ENCODE measurements at regions of chr12 and their contacts with region 1.

Region 1: GRCh38 chr12:31896514-31897039 is 62.6 kb upstream of the RESF1 start:
- DNase-seq: peak; percentile 88
- H3K4me3 Mint-ChIP-seq: peak overlapping the region; percentile 73
- H3K27ac Mint-ChIP-seq: peak overlapping the region; percentile 99
- H3K4me1 Mint-ChIP-seq: peaks cover 51% of the 10 kb centered on the region
- H3K27me3 Mint-ChIP-seq: no peaks in the 10 kb centered on the region

Region 2: DNA sequence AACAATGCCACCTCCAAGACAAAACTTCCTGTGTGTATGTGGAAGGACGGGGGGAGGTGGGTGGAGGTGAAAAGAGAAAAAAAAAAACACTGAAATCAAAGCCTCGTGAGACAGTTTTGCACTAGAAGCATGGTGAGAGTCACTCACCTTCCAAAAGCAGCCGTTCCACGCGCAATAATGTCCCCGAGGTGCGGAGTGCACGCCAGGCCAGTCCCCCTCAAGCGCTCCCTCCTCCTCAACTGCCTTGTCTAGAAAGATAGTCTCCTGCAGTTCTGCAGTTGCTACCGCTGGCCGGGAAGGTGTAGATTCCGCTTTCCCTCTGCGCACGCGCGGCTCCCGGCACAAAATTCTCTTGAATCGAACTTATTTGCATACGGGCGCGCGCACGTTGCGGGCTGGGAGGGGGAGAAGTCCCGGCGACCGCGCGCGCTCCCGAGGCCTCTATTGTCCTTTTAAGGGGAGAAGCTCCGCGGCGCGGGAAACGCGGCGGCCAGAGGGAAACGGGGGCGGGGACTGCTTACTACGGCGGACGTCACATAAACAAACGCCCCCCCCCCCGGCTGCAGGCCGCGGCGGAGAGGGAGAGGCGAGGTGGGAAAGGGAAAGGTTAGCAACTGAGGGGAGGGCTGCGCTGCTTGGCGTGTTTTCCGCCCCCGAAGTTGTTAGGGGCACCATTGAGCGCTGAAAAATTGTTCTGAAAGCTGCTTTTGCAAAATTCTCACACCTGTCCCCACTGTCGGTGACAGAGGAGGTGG is 570.5 kb before region 1 on chr12 and contains the start of gene SINHCAF:
- intact Hi-C with region 1: loop called (anchors 10 kb)
- DNase-seq: peak; percentile 98
- H3K4me3 Mint-ChIP-seq: peak within 1 kb of the TSS; percentile 97
- H3K27ac Mint-ChIP-seq: peak within 1 kb of the TSS; percentile 95
- H3K4me1 Mint-ChIP-seq: peaks cover 41% of the 10 kb centered on the region
- H3K27me3 Mint-ChIP-seq: peaks cover 15% of the 10 kb centered on the region
- total RNA-seq, gene SINHCAF: 270 and 276 TPM in 2 replicates

Region 3: DNA sequence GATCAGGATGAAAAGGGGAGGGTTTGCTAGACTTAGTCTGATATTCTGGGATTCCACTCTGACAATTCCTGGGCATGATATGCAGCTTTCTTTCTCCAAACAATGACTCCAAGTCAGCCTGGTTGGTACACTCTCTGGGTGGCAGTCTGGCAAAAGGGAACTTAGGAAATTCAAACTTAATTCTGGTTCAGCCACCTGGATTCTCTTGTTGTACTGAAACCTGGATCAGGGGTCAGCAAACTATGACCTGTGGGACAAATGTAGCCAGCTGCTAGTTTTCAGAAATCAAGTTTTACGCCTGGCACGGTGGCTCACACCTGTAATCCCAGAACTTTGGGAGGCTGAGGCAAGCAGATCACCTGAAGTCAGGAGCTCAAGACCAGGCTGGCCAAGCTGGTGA is 174.0 kb before region 1 on chr12:
- intact Hi-C with region 1: loop called (anchors 1 kb)
- DNase-seq: no peak
- H3K4me3 Mint-ChIP-seq: no peak overlapping the region
- H3K27ac Mint-ChIP-seq: no peak overlapping the region
- H3K4me1 Mint-ChIP-seq: peaks cover 53% of the 10 kb centered on the region
- H3K27me3 Mint-ChIP-seq: no peaks in the 10 kb centered on the region

Region 4: GRCh38 chr12:31749024-31749704 is 147.4 kb before region 1 on chr12:
- intact Hi-C with region 1: loop called (anchors 1 kb)
- DNase-seq: peak; percentile 71
- H3K4me3 Mint-ChIP-seq: no peak overlapping the region
- H3K27ac Mint-ChIP-seq: peak overlapping the region; percentile 27
- H3K4me1 Mint-ChIP-seq: peaks cover 53% of the 10 kb centered on the region
- H3K27me3 Mint-ChIP-seq: no peaks in the 10 kb centered on the region

Region 5: DNA sequence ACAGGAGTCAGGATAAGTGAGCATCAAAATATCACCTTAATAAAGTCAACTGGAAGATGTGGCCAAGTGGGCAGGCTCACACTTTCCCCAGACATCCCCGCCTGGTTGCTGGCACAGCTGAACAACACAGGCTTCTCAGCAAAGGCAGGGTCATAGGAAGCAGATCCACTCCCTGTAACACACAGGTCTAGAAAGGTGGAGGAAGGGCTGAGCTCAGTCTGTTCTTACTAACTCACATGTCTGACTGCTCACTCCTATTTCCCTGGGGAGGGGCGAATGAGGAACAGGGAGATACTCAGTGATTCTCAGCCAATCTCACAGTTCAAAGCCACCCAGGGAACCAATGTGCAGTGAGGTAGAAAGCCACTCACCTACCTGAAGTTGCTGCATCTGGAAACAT is 122.7 kb before region 1 on chr12:
- intact Hi-C with region 1: no loop called
- DNase-seq: no peak
- H3K4me3 Mint-ChIP-seq: no peak overlapping the region
- H3K27ac Mint-ChIP-seq: no peak overlapping the region
- H3K4me1 Mint-ChIP-seq: peaks cover 15% of the 10 kb centered on the region
- H3K27me3 Mint-ChIP-seq: no peaks in the 10 kb centered on the region

Region 6: GRCh38 chr12:31874961-31875608 is 21.5 kb before region 1 on chr12:
- intact Hi-C with region 1: loop called (anchors 1 kb)
- DNase-seq: peak; percentile 68
- H3K4me3 Mint-ChIP-seq: peak overlapping the region; percentile 80
- H3K27ac Mint-ChIP-seq: peak overlapping the region; percentile 100
- H3K4me1 Mint-ChIP-seq: peaks cover 30% of the 10 kb centered on the region
- H3K27me3 Mint-ChIP-seq: no peaks in the 10 kb centered on the region

Region 7: DNA sequence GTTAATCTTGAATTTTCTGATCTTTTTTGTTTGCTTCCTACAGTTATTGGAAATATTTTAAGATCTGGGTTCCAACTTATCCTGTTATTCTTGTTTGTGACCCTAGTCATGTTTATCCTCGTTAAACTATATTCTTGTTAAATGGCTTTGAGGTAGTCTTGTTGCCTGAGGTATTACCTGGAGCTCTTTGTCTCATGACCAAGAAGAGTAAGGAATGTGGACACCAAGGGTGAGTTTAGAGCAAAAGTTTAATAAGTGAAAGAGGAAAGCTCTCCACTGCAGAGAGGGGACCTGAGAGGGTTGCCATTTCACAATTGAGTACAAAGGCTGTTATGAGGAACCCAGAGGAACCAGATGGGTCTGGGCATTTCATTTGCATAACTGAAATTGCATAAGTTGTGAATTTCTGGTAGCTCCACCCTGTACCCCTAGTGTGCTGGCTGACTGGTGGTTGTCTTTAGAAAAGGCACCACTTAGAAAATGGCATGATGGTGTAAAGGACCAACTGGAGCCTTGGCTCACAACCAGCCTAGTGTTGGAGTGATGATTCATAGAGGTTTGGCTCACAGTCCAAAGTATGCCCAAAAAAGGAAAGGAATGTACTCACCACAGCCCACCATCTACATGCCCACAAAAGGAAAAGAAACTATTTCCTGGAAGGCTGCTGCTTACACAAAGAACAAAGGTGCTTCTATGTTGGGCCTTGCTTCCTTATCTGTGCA is 25.9 kb after region 1 on chr12:
- intact Hi-C with region 1: no loop called
- DNase-seq: no peak
- H3K4me3 Mint-ChIP-seq: no peak overlapping the region
- H3K27ac Mint-ChIP-seq: no peak overlapping the region
- H3K4me1 Mint-ChIP-seq: peaks cover under 1% of the 10 kb centered on the region
- H3K27me3 Mint-ChIP-seq: no peaks in the 10 kb centered on the region

Region 8: DNA sequence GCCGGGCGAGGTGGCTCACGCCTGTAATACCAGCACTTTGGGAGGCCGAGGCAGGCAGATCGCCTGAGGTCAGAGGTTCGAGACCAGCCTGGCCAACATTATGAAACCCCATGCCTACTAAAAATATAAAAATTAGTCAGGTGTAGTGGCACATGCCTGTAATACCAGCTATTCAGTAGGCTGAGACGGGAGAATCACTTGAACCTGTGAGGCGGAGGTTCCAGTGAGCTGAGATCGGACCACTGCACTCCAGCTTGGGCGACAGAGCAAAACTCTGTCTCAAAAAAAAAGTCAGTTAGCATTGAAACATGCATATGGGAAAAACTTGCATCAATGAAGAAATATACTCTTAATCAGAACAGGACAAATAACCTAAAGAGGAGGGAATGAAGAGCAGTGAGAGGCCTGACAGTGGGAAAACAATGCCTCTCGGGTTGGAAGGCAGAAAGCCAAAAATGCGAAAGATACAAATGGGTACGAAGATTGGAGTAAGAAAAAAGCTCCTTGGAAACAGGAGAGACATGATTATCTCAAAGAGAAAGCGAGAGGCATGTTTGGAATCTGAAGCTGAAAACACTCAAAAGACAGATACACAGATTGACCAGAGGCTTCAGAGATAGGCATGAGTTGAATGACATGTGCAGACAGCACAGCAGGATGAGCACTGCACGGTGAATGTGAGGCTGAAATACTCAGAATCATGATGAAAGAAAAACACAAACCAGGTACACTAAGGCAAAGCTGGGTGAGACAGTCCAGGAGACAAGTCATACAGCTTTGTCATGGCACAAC is 93.2 kb after region 1 on chr12:
- intact Hi-C with region 1: loop called (anchors 2 kb)
- DNase-seq: no peak
- H3K4me3 Mint-ChIP-seq: peak overlapping the region; percentile 54
- H3K27ac Mint-ChIP-seq: peak overlapping the region; percentile 81
- H3K4me1 Mint-ChIP-seq: peaks cover 63% of the 10 kb centered on the region
- H3K27me3 Mint-ChIP-seq: no peaks in the 10 kb centered on the region

Measured in activated T-helper 1 cell treated with anti-CD3 and anti-CD28 coated beads, Interleukin-12 subunit alpha, Interleukin-12 subunit beta, Interleukin-2, Interleukin-4 antibody, amounts not matched to agents 30 ng/mL and 10 ng/mL and 1 ng/mL, durations not matched to agents 14 hours and 24 hours and 36 hours (primary cell).